ENCODE measurements at regions of chr5 and their contacts with region 1.

Region 1: GRCh38 chr5:37814699-37815098 is 25.1 kb downstream of the GDNF start:
- DNase-seq: no peak
- H3K4me3 ChIP-seq: no peak overlapping the region
- H3K27ac ChIP-seq: no peak overlapping the region
- H3K4me1 ChIP-seq: no peaks in the 10 kb centered on the region
- CTCF ChIP-seq: no peak

Region 2: DNA sequence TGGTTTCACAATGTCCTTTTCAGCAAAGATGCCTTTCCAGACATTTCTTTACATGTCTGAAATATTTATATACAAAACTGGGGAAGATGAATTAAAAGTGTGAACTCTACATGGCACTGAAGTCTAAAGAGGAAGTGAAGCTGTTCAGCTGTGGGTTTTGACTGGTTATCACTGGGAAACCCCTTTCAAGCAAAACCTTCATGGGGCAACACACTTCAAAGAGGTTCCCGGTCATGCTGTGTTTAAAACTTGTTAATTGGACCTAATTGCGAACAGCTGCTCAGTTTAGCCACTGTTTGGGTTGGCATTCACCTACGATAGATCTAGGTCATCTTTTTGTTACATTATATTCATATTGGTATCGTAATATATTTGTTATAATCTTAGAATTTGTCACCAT is 45.1 kb after region 1 on chr5:
- CTCF ChIA-PET with region 1: no interaction called
- POLR2A ChIA-PET with region 1: no interaction called
- intact Hi-C with region 1: no loop called
- DNase-seq: peak; percentile 32
- H3K4me3 ChIP-seq: no peak overlapping the region
- H3K27ac ChIP-seq: no peak overlapping the region
- H3K4me1 ChIP-seq: no peaks in the 10 kb centered on the region
- CTCF ChIP-seq: no peak

Region 3: DNA sequence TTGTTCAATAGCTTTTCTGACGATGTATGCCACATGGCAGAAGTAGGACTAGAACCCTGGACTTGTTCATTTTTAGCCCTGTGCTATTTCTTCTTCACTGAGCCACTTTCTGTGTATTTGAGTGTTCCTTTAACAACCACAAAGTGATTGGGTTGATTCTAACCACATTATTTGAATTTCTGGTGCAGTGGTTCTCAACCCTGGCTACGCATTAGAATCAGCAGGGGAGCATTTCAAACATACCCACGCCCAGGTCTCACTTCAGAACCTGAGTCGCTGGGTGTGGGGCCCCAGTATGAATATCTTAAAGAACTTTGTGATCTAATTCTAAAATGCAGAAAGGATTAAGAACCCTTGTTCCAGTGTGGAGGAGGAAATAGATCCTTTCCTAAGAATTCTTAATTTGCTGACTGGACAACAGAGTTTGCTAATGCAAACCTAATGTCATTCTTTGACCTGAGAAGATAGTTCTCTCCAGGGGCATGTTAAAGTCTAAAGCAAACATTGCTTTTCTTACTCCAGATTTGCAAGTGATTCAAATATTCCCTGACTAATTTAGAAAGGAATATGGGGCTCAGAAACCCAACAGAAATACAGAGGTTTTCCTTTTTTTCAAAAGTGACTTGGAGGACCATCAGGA is 100.5 kb after region 1 on chr5:
- CTCF ChIA-PET with region 1: interaction called, 14 read pairs
- POLR2A ChIA-PET with region 1: no interaction called
- intact Hi-C with region 1: no loop called
- DNase-seq: no peak
- H3K4me3 ChIP-seq: no peak overlapping the region
- H3K27ac ChIP-seq: no peak overlapping the region
- H3K4me1 ChIP-seq: no peaks in the 10 kb centered on the region
- CTCF ChIP-seq: no peak